Activated CD4-positive, alpha-beta memory T cell treated with anti-CD3 and anti-CD28 coated beads, Interleukin-2, amount 10 ng/mL, durations not matched to agents 7 days and 5 days (primary cell): ENCODE measurements at regions of chr1 and their contacts with region 1.

Region 1: DNA sequence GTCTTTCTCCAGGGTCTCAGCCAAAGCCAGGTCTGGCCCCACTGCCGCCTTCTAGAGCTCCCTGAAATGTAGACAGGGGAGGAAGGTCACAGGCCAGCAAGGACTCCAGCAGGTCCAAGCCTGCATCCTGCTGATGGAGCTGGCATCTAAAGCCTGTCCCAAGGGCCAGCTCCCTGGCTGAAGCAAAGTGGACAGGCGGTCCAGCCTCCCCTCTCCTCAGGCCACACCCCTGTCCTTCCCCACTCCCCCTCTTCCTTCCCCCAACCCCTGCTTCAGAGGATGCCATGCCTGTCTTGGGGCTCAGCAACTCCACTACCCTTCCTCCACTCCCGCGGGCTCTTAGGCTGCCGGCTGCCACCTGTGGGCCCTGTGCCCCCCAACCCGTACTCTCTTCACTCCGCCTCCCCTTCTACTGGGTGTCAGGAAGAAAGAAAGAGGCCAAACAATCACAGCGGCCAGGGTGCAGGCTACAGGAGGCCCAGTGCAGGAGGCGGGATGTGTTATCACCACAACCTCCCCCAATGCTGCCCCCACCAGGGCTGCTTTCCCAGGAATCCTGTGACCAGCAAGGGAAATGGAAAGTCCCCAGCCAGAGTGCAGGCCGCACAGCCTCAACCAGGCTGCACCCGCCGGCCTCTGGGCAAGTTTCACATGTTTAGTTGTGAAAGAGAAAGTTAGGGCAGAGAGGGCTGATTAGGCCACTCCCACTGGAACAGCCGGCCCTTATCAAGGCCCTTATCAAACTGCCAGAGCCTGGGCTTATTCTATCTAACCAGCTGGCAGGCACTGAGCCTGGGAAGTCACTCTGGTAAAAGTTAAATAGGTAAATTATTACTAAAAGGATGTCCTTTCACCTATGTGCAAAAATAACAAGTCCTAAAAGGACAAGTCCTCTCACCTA is 34.1 kb downstream of the ACOT7 start:
- DNase-seq: peak; percentile 72
- H3K4me3 Mint-ChIP-seq: peak overlapping the region; percentile 58
- H3K27ac Mint-ChIP-seq: peak overlapping the region; percentile 85
- H3K4me1 Mint-ChIP-seq: peaks cover 44% of the 10 kb centered on the region
- H3K27me3 Mint-ChIP-seq: no peaks in the 10 kb centered on the region

Region 2: DNA sequence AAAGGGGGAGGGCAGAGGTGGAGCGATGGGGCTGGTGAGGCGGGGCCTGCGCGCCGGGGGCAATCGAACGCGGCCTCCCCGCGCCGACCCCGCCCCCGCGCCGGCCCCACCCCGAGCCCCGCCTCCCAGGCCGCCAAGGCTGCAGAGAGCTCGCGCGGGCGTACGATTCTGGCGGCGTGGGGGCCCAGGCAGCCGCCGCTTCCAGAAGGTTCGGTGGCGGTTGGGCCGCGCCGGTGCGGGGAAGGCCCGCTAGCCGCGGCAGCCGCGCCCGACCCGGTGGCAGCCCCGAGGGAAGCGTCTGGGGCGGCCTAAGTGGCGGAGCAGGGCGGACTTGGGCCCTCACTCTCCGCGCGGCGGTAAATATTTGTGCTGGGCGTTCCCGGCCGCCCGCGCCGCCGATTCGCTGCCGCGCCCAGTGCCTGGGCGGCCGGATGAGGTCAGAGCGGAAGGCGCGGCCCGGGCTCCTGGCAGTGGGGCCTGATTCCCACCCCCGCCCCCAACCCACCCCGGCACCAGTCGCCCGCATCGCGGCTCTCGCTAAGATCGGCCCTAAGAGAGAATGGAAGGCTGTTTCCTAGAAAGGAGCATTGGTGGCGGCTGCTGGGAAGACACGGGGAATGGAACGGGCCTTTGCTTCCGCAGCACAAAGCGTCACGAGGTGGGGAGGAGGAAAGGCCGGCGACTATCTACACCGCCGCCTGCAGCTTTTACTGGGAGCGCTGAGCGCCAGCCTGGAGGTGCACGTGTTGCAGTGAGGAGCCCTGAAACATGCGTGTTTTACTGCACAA is 34.1 kb after region 1 on chr1 and contains the start of gene ACOT7:
- CTCF ChIA-PET with region 1: interaction called, 18 read pairs
- POLR2A ChIA-PET with region 1: interaction called, 34 read pairs
- DNase-seq: peak; percentile 92
- H3K4me3 Mint-ChIP-seq: peak within 1 kb of the TSS; percentile 86
- H3K27ac Mint-ChIP-seq: peak within 1 kb of the TSS; percentile 88
- H3K4me1 Mint-ChIP-seq: peaks cover 40% of the 10 kb centered on the region
- H3K27me3 Mint-ChIP-seq: no peaks in the 10 kb centered on the region
- total RNA-seq, gene ACOT7: 56.8 to 58.6 TPM

Region 3: GRCh38 chr1:6401673-6402072 is 42.2 kb after region 1 on chr1:
- CTCF ChIA-PET with region 1: interaction called, 37 read pairs
- POLR2A ChIA-PET with region 1: interaction called, 3 read pairs
- DNase-seq: no peak
- H3K4me3 Mint-ChIP-seq: no peak overlapping the region
- H3K27ac Mint-ChIP-seq: no peak overlapping the region
- H3K4me1 Mint-ChIP-seq: peaks cover 12% of the 10 kb centered on the region
- H3K27me3 Mint-ChIP-seq: peaks cover 16% of the 10 kb centered on the region

Region 4: DNA sequence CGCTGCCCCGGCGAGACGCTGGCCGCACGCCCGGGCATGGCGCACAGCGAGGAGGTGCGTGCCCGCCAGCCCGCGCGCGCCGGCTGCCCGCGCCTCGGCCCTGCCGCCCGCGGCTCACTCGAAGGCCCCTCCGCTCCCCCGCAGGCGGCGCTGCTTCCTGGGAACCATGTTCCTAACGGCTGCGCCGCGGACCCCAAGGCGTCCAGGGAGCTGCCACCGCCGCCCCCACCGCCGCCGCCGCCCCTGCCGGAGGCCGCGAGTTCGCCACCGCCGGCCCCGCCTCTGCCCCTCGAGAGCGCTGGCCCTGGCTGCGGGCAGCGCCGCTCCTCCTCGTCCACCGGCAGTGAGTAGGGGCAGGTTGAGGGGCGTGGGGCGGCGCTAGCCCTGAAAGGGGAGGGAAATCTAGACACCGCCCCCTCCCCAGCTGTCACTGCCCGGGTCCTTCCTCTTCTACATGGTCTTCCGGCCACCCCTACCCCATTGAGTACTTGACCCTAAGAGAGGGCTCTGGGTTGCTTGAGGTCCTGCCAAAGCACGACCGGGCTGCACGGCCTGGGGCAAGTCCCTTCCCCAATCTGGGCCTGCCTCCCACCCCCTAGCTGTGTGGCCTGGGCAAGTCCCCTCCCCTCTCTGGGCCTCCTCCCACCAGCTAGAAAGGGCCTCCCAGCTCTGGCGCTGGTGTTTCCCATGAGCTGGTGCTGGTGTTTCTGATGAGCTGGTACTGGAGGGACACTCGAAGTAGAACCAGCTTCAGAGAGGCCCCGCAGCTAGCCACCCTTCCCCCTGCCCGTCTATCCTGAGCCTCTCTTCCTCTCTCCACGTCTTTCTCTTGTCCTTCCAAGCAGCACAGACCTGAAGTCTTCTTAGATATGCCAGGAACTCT is 89.5 kb after region 1 on chr1:
- CTCF ChIA-PET with region 1: no interaction called
- POLR2A ChIA-PET with region 1: no interaction called
- DNase-seq: no peak
- H3K4me3 Mint-ChIP-seq: no peak overlapping the region
- H3K27ac Mint-ChIP-seq: no peak overlapping the region
- H3K4me1 Mint-ChIP-seq: peaks cover 14% of the 10 kb centered on the region
- H3K27me3 Mint-ChIP-seq: peaks cover 61% of the 10 kb centered on the region